MCF 10A (cell line): ENCODE measurements at regions of chr3 and their contacts with region 1.

Region 1: DNA sequence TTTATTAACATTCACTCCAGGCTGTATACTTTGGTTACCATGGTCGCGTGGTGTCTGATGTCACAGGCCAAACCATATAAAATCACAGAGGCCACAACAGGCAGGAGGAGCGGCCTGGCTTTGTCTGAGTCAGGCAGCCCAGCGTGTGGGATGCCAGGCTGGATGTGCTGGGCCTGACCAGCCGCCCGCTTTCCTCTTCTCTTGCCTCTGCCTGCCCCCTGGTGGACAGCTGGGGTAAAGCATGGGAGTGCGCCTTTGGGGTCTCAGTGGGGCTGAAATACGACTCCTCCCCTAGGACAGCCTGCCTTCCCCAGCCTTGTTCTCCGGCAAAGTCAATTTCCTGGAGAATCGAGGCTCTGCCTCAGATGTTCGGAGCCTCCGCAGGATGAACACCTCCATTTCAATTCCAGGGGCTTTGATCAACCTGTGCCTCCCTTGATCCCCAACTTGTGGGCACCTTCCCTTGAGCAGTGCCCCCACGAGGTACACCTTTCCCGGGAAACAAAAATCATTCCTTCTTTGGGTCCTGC is 78.2 kb downstream of the CCNL1 start:
- DNase-seq: peak; percentile 90
- H3K4me3 Mint-ChIP-seq: no peak overlapping the region
- H3K27ac Mint-ChIP-seq: peak overlapping the region; percentile 94
- H3K4me1 Mint-ChIP-seq: peaks cover 23% of the 10 kb centered on the region
- H3K27me3 Mint-ChIP-seq: no peaks in the 10 kb centered on the region
- CTCF ChIP-seq: peak; percentile 97

Region 2: GRCh38 chr3:156535162-156535627 is 546.6 kb before region 1 on chr3:
- CTCF ChIA-PET with region 1: interaction called, 7 read pairs
- POLR2A ChIA-PET with region 1: no interaction called
- intact Hi-C with region 1: loop called (anchors 1 kb)
- DNase-seq: peak; percentile 91
- H3K4me3 Mint-ChIP-seq: no peak overlapping the region
- H3K27ac Mint-ChIP-seq: peak overlapping the region; percentile 1
- H3K4me1 Mint-ChIP-seq: peaks cover 7% of the 10 kb centered on the region
- H3K27me3 Mint-ChIP-seq: no peaks in the 10 kb centered on the region
- CTCF ChIP-seq: no peak

Region 3: GRCh38 chr3:156723182-156723619 is 358.5 kb before region 1 on chr3:
- CTCF ChIA-PET with region 1: interaction called, 3 read pairs
- POLR2A ChIA-PET with region 1: no interaction called
- intact Hi-C with region 1: loop called (anchors 5 kb)
- DNase-seq: no peak
- H3K4me3 Mint-ChIP-seq: no peak overlapping the region
- H3K27ac Mint-ChIP-seq: peak overlapping the region; percentile 21
- H3K4me1 Mint-ChIP-seq: peaks cover 18% of the 10 kb centered on the region
- H3K27me3 Mint-ChIP-seq: no peaks in the 10 kb centered on the region
- CTCF ChIP-seq: no peak

Region 4: DNA sequence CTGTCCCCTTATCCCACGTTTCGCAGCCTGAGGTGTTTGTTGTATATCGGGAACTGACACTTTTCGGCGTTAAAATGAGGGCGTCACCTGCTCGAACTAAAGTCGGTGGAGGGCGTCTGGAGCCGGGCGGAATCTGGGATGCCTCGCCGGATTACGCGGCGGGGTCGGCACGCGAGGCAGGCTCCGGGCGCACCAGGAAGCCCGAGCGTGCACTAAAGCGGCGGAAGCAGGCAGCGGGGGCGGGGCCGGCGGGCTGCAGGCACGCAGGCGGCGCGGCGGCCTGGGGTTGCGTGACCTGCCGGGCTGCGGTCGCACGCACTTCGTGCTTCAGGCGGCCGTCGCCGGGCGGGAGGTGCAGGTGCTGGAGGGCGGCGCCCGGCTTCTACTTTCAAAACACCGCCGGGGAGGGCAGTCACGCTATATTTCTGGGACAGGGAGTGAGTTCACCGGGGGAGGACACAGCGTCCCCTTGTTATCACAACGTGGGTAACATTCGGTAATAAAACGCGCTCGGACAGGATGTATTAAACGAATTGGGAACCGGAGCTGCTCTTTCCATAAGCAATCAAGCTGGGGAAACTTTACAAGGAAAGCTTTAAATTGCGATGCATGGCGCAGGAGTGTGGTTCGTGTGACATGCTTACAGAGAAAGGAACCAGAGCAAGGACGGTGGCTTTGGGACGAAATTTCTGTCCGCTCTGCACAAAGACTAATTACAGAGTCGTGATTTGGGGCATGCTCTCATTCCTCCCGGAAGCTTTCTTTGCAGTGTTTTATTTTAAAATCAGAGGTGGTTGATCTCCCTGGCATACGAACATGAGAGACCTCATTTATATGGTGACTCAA is 264.7 kb before region 1 on chr3:
- CTCF ChIA-PET with region 1: interaction called, 7 read pairs
- POLR2A ChIA-PET with region 1: interaction called, 17 read pairs
- intact Hi-C with region 1: loop called (anchors 2 kb)
- DNase-seq: peak; percentile 86
- H3K4me3 Mint-ChIP-seq: peak overlapping the region; percentile 82
- H3K27ac Mint-ChIP-seq: peak overlapping the region; percentile 95
- H3K4me1 Mint-ChIP-seq: peaks cover 41% of the 10 kb centered on the region
- H3K27me3 Mint-ChIP-seq: no peaks in the 10 kb centered on the region
- CTCF ChIP-seq: no peak

Region 5: DNA sequence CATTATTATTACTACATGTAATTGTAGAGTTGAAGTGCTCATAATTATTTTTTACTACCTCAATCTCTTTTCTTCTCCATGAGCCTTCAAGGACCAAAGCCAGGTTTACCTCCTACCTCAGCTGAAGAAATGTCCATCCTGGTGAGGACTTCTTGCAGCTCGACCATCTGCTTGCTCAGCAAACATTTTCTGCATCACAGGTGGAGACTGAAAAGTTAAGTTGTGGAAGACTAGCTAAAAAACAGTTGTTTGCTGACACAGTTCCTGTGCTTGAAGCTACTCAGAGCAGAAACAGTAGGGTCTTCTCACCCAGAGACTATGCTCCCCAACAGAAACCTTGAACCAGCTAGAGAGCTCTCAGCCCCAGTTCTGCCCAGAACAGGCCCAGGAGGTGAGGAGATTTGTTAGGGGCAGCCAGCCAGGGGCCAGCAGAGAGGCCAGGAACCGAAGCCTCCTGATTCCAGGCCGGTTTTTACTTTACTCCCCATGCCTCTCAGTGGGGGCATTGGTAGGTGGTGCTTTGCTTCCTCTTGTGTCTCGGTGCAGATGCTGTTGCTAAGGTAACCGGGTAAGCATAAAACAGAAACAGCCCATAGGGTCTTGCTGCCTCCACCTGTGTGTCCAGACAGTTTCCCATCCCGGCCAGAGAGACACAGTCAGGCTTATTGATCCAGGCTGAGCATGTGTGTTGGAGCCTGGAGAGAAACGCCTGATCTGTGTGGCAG is 23.3 kb after region 1 on chr3:
- CTCF ChIA-PET with region 1: interaction called, 7 read pairs
- POLR2A ChIA-PET with region 1: interaction called, 192 read pairs
- intact Hi-C with region 1: no loop called
- DNase-seq: no peak
- H3K4me3 Mint-ChIP-seq: no peak overlapping the region
- H3K27ac Mint-ChIP-seq: peak overlapping the region; percentile 10
- H3K4me1 Mint-ChIP-seq: peaks cover 18% of the 10 kb centered on the region
- H3K27me3 Mint-ChIP-seq: no peaks in the 10 kb centered on the region
- CTCF ChIP-seq: no peak

Region 6: DNA sequence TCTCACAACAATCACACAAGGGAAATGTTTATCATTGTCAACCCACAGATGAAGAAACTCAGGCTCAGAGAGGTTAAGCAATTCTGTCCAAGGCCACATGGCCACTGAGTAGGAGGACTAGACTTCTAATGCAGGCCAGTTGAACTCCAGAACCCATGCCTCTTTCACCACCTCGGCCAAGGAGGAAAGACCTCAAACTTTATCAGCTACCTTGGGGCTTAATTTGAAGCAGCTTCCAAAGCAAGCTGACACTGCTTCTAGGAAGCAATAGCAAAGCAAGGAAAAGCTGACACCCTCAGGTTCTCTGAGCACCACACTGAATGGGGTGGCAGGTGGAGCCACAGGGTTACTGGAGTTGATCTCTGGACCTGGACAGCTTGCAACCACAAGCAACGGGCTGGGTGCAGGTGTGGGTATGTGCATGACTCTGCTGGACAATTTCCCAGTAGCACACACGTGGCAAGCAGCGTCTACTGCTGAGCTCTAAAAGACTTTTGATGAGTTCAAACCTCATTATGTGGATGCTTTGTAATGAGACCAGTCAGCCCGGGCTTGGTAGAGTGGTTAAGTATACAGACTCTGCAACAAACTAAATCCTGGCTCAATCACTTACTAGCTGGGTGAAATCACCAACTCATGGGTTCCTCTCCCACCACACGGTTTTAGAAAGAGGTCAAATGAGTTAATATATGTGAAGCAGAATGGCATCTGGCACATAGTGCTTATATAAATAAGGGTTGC is 55.1 kb after region 1 on chr3:
- CTCF ChIA-PET with region 1: interaction called, 260 read pairs
- POLR2A ChIA-PET with region 1: interaction called, 331 read pairs
- intact Hi-C with region 1: no loop called
- DNase-seq: peak; percentile 35
- H3K4me3 Mint-ChIP-seq: no peak overlapping the region
- H3K27ac Mint-ChIP-seq: no peak overlapping the region
- H3K4me1 Mint-ChIP-seq: peaks cover 27% of the 10 kb centered on the region
- H3K27me3 Mint-ChIP-seq: no peaks in the 10 kb centered on the region
- CTCF ChIP-seq: no peak

Region 7: GRCh38 chr3:157520485-157521150 is 438.9 kb after region 1 on chr3:
- CTCF ChIA-PET with region 1: no interaction called
- POLR2A ChIA-PET with region 1: no interaction called
- intact Hi-C with region 1: no loop called
- DNase-seq: no peak
- H3K4me3 Mint-ChIP-seq: no peak overlapping the region
- H3K27ac Mint-ChIP-seq: no peak overlapping the region
- H3K4me1 Mint-ChIP-seq: no peaks in the 10 kb centered on the region
- H3K27me3 Mint-ChIP-seq: peaks cover 21% of the 10 kb centered on the region
- CTCF ChIP-seq: no peak